CD4-positive, alpha-beta T cell (primary cell): ENCODE measurements at regions of chr5 and their contacts with region 1.

Region 1: DNA sequence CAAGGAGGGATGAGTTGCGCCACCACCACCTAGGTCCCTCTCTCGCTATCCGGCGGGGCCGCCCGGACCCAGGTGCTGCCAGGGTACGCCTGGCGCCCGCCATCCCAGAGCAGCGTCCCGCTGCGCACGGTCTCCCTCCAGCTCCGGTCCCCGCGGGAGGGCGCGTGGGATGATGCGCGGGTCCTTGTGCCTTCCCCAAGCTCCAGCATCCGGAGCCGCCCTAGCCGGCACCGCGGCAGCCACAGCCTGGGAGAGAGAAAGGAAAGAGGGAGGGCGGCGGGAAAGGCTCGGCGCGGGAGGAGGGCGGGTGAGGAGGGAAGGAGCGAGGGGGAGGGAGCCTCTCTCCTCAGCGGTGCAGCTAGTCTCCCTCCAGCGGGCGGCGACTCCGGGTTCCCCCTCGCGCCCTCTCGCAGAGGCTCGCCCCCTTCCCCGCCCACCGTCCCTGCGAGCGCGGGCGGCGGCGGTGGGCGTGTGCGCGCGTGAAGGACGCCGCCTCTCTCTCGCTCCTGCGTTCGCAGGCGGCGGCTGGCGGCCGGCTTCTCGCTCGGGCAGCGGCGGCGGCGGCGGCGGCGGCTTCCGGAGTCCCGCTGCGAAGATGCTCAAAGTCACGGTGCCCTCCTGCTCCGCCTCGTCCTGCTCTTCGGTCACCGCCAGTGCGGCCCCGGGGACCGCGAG is at the start of gene CAMK4:
- DNase-seq: peak; percentile 70 to 95 (median 81)
- ATAC-seq: peak; percentile 83
- H3K4me3 ChIP-seq: peak within 1 kb of the TSS; percentile 96
- H3K4me3 Mint-ChIP-seq: peak within 1 kb of the TSS; percentile 92
- H3K27ac ChIP-seq: peak within 1 kb of the TSS; percentile 72 to 79
- H3K27ac Mint-ChIP-seq: peak within 1 kb of the TSS; percentile 90
- H3K4me1 ChIP-seq: peaks cover 25% of the 10 kb centered on the region
- H3K4me1 Mint-ChIP-seq: peaks cover 35% of the 10 kb centered on the region
- H3K27me3 ChIP-seq: no peaks in the 10 kb centered on the region
- H3K27me3 Mint-ChIP-seq: no peaks in the 10 kb centered on the region
- CTCF ChIP-seq: peak; percentile 31
- total RNA-seq, gene CAMK4: 202 to 225 TPM

Region 2: GRCh38 chr5:111158105-111158744 is 65.8 kb before region 1 on chr5:
- CTCF ChIA-PET with region 1: interaction called, 7 read pairs
- POLR2A ChIA-PET with region 1: interaction called, 4 read pairs
- intact Hi-C with region 1: loop called (anchors 2 to 5 kb)
- DNase-seq: peak; percentile 60 to 90 (median 76)
- ATAC-seq: peak; percentile 88
- H3K4me3 ChIP-seq: no peak overlapping the region
- H3K4me3 Mint-ChIP-seq: no peak overlapping the region
- H3K27ac ChIP-seq: no peak overlapping the region
- H3K27ac Mint-ChIP-seq: no peak overlapping the region
- H3K4me1 ChIP-seq: no peaks in the 10 kb centered on the region
- H3K4me1 Mint-ChIP-seq: peaks cover 11% of the 10 kb centered on the region
- H3K27me3 ChIP-seq: no peaks in the 10 kb centered on the region
- H3K27me3 Mint-ChIP-seq: no peaks in the 10 kb centered on the region
- CTCF ChIP-seq: peak; percentile 100

Region 3: GRCh38 chr5:111211341-111211740 is 12.7 kb before region 1 on chr5:
- CTCF ChIA-PET with region 1: interaction called, 5 read pairs
- POLR2A ChIA-PET with region 1: interaction called, 7 read pairs
- intact Hi-C with region 1: loop called in 1 of 2 experiments (anchors 2 kb)
- DNase-seq: no peak
- ATAC-seq: no peak
- H3K4me3 ChIP-seq: no peak overlapping the region
- H3K4me3 Mint-ChIP-seq: peak overlapping the region; percentile 13
- H3K27ac ChIP-seq: no peak overlapping the region
- H3K27ac Mint-ChIP-seq: no peak overlapping the region
- H3K4me1 ChIP-seq: peaks cover 3% of the 10 kb centered on the region
- H3K4me1 Mint-ChIP-seq: peaks cover 12% of the 10 kb centered on the region
- H3K27me3 ChIP-seq: no peaks in the 10 kb centered on the region
- H3K27me3 Mint-ChIP-seq: no peaks in the 10 kb centered on the region
- CTCF ChIP-seq: no peak

Region 4: DNA sequence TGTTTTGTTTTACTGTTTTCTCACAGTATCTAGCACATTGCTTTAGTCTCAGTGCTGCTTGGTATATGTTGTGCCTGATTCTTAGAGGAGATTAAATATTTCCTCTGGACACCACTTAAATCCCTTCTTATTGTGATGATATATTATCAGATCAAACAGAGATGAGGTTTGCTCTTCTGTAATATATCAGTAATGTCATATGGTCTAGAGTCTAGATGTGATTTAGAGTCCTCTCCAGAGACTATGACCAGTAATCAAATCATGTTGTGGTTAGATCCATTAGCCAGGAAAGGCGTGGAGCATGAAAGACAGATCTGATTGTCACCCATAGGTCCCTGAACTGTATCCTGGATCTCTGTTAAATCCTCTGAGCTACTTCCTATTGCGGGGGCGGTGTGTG is 24.5 kb after region 1 on chr5:
- CTCF ChIA-PET with region 1: interaction called, 36 read pairs
- POLR2A ChIA-PET with region 1: interaction called, 196 read pairs
- intact Hi-C with region 1: loop called in 1 of 2 experiments (anchors 2 kb)
- DNase-seq: no peak
- ATAC-seq: no peak
- H3K4me3 ChIP-seq: no peak overlapping the region
- H3K4me3 Mint-ChIP-seq: peak overlapping the region; percentile 53
- H3K27ac ChIP-seq: no peak overlapping the region
- H3K27ac Mint-ChIP-seq: peak overlapping the region; percentile 81
- H3K4me1 ChIP-seq: peaks cover 31% of the 10 kb centered on the region
- H3K4me1 Mint-ChIP-seq: peaks cover 86% of the 10 kb centered on the region
- H3K27me3 ChIP-seq: no peaks in the 10 kb centered on the region
- H3K27me3 Mint-ChIP-seq: no peaks in the 10 kb centered on the region
- CTCF ChIP-seq: no peak

Region 5: DNA sequence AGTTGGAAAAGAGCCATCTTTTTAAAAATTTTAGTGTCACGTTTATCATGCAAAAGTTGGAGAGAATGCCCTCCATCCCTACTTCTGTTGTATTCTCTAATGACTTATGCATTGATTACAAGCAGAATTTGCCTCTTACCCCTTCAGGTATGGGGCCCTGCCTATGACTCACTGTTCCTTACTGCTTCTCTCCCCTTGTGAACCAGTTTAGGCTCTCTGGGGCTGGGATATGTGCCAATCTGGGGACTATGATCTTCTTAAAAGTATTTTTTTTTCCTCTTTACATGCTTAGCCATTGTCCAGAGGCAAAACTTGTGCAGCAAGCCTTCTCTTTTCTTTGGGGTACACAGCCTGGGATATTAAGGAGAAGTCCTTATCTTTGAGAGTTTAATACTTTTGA is 37.6 kb after region 1 on chr5:
- CTCF ChIA-PET with region 1: interaction called, 36 read pairs
- POLR2A ChIA-PET with region 1: interaction called, 4 read pairs
- intact Hi-C with region 1: loop called in 1 of 2 experiments (anchors 5 kb)
- DNase-seq: peak in 1 of 14 experiments; percentile 26
- ATAC-seq: peak; percentile 44
- H3K4me3 ChIP-seq: no peak overlapping the region
- H3K4me3 Mint-ChIP-seq: no peak overlapping the region
- H3K27ac ChIP-seq: no peak overlapping the region
- H3K27ac Mint-ChIP-seq: no peak overlapping the region
- H3K4me1 ChIP-seq: peaks cover 22% of the 10 kb centered on the region
- H3K4me1 Mint-ChIP-seq: no peaks in the 10 kb centered on the region
- H3K27me3 ChIP-seq: no peaks in the 10 kb centered on the region
- H3K27me3 Mint-ChIP-seq: no peaks in the 10 kb centered on the region
- CTCF ChIP-seq: no peak